ENCODE measurements at regions of chr6 and their contacts with region 1.

Region 1: GRCh38 chr6:41545703-41546474 is at the start of gene FOXP4:
- DNase-seq: peak; percentile 95
- ATAC-seq: peak; percentile 91
- H3K4me3 ChIP-seq: peak within 1 kb of the TSS; percentile 93 to 96
- H3K27ac ChIP-seq: peak within 1 kb of the TSS; percentile 73 to 94
- H3K4me1 ChIP-seq: peaks cover 0 to 3% of the 10 kb centered on the region in 2 donors
- H3K27me3 ChIP-seq: no peaks in the 10 kb centered on the region
- total RNA-seq, gene FOXP4: 31.6 to 36.2 TPM

Region 2: DNA sequence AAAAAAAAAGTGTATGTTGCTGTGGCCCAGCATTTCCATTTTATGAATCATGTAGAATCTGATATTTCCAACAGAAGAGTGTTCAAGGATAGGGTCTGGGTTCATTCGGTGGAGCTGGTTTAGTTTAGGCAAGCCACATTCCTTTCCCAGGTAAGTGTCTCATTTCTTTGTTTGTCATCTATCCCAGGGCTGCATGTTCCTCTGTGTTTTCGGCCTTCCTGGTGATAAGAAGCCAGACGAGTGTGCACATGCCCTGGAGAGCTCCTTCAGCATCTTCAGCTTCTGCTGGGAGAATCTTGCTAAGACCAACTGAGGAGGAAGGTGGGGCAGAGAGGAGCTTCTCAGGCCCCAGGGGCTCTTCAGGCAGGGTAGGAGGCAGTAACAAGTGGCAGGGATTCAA is 434.9 kb before region 1 on chr6:
- intact Hi-C with region 1: no loop called
- DNase-seq: no peak
- ATAC-seq: no peak
- H3K4me3 ChIP-seq: no peak overlapping the region
- H3K27ac ChIP-seq: no peak overlapping the region
- H3K4me1 ChIP-seq: no peaks in the 10 kb centered on the region
- H3K27me3 ChIP-seq: no peaks in the 10 kb centered on the region

Region 3: GRCh38 chr6:41424370-41425058 is 121.4 kb before region 1 on chr6:
- intact Hi-C with region 1: loop called (anchors 2 to 5 kb)
- DNase-seq: peak; percentile 86 to 90
- ATAC-seq: peak; percentile 45
- H3K4me3 ChIP-seq: no peak overlapping the region
- H3K27ac ChIP-seq: no peak overlapping the region
- H3K4me1 ChIP-seq: no peaks in the 10 kb centered on the region
- H3K27me3 ChIP-seq: no peaks in the 10 kb centered on the region

Region 4: GRCh38 chr6:41449399-41450245 is 96.3 kb before region 1 on chr6:
- intact Hi-C with region 1: loop called in 1 of 2 experiments (anchors 5 kb)
- DNase-seq: no peak
- ATAC-seq: no peak
- H3K4me3 ChIP-seq: no peak overlapping the region
- H3K27ac ChIP-seq: no peak overlapping the region
- H3K4me1 ChIP-seq: no peaks in the 10 kb centered on the region
- H3K27me3 ChIP-seq: no peaks in the 10 kb centered on the region

Region 5: DNA sequence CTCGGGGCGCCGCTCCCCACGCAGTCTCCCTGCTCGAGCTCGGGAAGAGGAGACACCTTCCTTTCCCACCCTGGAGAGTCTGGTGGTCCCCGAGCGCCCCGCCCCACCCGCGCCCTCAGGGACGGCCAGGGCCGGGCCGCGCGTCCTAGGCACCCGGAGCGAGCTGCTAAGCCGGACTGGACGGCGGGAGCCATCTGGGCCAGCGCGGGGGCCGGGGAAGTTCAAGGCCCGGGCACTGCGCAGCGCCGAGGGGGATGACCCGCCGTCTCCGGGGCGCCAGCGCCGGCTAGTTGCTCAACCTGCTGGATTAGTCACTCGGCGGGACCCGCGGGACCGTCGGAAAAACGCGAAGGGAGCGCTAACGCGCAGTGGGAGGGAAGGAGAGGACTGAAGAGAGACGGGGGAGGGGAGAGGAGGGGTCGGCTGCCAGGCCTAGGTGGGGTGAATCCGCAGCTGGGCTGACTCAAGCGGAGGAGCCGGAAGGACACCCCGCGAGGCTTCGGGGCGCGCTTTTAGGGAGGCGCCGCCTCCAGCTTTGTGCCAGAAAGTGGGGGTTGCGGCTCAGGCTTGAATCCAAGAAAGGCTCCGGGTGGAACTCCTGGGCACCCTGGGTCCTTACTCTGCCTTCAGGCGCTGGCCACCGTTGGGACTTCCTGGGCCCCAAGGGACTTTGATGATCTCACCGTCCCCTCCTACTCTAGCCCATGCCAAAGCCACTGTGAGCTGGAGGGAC is 75.4 kb before region 1 on chr6:
- intact Hi-C with region 1: loop called in 1 of 2 experiments (anchors 5 kb)
- DNase-seq: peak; percentile 88 to 97
- ATAC-seq: peak; percentile 89
- H3K4me3 ChIP-seq: no peak overlapping the region
- H3K27ac ChIP-seq: no peak overlapping the region
- H3K4me1 ChIP-seq: no peaks in the 10 kb centered on the region
- H3K27me3 ChIP-seq: no peaks in the 10 kb centered on the region

Region 6: GRCh38 chr6:41505122-41506049 is 40.5 kb before region 1 on chr6:
- intact Hi-C with region 1: loop called (anchors 2 to 5 kb)
- DNase-seq: peak; percentile 93 to 95
- ATAC-seq: peak; percentile 89
- H3K4me3 ChIP-seq: peak overlapping the region in 1 of 2 donors; percentile 23
- H3K27ac ChIP-seq: peak overlapping the region in 1 of 2 donors; percentile 50
- H3K4me1 ChIP-seq: no peaks in the 10 kb centered on the region
- H3K27me3 ChIP-seq: no peaks in the 10 kb centered on the region

Region 7: DNA sequence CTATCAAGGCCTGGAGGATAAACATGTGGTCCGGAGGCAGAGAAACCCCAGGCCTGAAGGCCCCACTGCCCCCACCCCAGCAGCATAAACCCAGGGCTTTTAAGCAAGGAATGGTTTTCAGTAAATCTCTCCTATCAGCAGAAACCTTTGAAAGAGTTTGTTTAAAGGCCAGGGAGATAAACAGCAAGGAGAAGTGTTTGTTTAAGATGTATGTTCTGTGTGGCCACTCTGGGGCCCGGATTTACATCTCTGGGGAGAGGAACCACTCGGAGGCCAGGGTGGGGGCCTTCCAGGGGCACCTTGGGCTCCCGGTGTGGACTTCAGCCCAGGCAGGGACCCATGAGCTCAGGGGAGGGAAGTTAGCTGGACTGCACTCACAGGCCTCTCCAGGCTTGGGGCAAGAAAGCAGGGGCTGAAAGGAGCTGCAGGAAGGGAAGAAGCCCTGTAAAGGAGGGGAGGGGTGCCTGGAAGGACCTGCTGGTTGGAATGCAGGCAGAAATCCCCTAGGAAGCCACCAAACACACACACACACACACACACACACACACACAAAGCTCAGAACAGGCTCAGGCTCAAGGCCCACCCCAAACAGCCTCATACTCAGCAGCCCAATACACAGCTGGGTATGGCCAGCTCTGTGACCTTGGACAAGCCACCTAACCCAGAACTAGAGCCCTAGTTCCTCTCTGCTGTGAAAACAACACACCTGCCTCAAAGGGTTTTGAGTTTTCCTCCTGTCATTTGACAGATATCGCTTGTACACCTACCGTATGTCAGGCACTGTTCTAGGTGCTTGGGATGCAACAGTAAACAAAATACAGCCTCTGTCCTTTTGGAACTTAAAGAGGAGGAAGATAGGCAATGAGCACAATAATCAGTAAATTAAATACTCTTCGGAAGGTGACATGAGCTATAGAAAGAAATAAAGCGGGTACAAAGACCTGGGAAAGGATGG is 25.9 kb before region 1 on chr6:
- intact Hi-C with region 1: no loop called
- DNase-seq: no peak
- ATAC-seq: no peak
- H3K4me3 ChIP-seq: no peak overlapping the region
- H3K27ac ChIP-seq: no peak overlapping the region
- H3K4me1 ChIP-seq: no peaks in the 10 kb centered on the region
- H3K27me3 ChIP-seq: no peaks in the 10 kb centered on the region

Region 8: DNA sequence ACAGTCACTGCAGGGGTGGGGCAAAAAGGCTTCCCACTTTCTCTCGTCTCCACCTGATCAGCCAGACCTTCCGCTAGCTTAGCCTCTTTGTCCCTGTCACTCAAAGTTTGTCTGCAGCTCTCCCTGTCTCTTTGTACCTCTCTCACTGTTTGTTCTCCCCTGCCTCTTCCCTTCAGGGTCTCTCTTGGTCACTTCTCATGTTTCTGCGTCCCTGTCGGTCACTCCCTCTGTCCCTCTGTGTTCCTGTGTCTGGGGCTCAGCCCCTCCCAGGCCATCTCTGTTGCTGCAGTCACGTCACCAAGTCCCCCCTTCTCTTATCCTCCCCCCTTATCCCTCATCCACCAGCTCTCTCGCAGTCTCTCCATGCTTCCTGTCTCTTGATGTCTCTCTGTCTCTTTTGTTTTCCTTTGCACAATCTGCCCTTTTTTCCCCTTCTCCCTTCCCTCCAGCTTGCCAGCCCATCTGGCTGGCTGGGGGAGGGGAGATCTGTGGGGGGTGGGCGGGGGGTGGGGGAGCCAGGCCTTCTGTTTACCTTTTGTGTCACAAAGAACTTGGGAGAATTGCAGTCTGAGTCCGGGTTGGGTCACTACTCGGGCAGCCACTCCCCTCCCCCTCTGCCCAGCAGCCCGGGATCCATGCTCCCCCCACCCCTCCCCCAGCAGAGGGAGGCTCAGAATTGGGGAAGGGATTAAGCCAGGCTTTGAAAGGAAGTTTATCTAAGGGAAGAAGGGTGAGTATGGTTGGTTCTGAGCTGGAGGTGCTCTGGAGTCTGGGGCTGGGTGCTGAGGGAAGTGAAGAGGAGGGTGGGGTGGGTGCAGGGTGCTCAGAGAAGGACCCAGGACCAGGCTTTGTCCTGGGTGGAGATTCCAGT is 32.6 kb after region 1 on chr6:
- intact Hi-C with region 1: loop called in 1 of 2 experiments (anchors 2 kb)
- DNase-seq: no peak
- ATAC-seq: no peak
- H3K4me3 ChIP-seq: no peak overlapping the region
- H3K27ac ChIP-seq: no peak overlapping the region
- H3K4me1 ChIP-seq: no peaks in the 10 kb centered on the region
- H3K27me3 ChIP-seq: no peaks in the 10 kb centered on the region

Region 9: GRCh38 chr6:41591859-41592502 is 46.1 kb after region 1 on chr6:
- intact Hi-C with region 1: loop called in 1 of 2 experiments (anchors 5 kb)
- DNase-seq: peak; percentile 78 to 90
- ATAC-seq: peak; percentile 86
- H3K4me3 ChIP-seq: no peak overlapping the region
- H3K27ac ChIP-seq: no peak overlapping the region
- H3K4me1 ChIP-seq: no peaks in the 10 kb centered on the region
- H3K27me3 ChIP-seq: no peaks in the 10 kb centered on the region